ENCODE measurements at regions of chr1 and their contacts with region 1.

Region 1: GRCh38 chr1:154220071-154220969 is at the start of gene UBAP2L:
- DNase-seq: peak; percentile 99
- H3K4me3 Mint-ChIP-seq: peak within 1 kb of the TSS; percentile 96
- H3K27ac Mint-ChIP-seq: peak within 1 kb of the TSS; percentile 98
- H3K4me1 Mint-ChIP-seq: peaks cover 72% of the 10 kb centered on the region
- H3K27me3 Mint-ChIP-seq: no peaks in the 10 kb centered on the region
- total RNA-seq, gene UBAP2L: 154 to 164 TPM

Region 2: DNA sequence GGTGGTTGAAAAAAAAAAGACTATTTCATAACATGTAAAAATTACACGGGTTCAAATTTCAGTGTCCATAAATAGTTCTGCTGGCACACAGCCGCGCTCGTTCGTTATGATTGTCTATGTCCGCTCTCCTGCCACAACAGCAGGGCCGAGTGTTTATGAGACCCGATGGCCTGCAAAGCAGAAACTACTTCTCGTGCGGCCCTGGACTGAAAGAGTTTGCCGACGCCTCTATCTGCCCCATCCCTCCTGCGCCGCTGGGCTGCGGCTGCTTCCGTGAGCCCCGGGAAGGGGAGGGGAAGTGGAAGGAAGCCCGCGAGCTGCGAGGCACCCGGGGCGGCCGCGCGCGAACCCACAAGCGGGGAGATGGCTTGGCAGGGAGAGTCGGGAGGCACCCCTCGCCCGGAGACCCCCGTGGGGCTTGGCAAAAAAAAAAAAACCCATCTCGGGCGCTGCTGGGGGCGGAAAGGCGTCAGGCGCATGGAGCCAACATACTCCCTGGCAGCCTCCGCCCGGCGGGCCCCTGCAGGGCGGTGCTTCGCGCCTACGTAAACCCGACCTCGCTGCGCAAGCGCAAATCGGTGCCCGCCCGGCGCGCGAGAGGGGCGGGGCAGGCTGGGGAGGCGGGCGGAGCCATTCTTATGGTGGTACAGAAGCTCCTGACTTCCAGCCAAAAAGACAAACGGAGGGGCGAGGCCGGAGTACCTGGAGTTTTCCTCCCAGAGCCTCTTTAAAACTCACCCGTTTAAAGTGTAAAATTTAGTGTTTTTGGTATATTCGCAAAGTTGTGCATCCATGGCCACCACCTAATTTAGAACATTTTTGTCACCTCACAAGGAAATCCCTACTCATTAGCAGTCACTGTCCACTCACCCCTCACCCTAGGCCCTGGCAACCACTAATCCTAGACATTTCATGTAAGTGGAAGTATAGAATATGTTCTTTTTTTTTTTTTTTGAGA is 436.8 kb before region 1 on chr1:
- CTCF ChIA-PET with region 1: no interaction called
- intact Hi-C with region 1: loop called (anchors 2 kb)
- DNase-seq: peak; percentile 93
- H3K4me3 Mint-ChIP-seq: peak overlapping the region; percentile 95
- H3K27ac Mint-ChIP-seq: peak overlapping the region; percentile 92
- H3K4me1 Mint-ChIP-seq: peaks cover 5% of the 10 kb centered on the region
- H3K27me3 Mint-ChIP-seq: no peaks in the 10 kb centered on the region

Region 3: GRCh38 chr1:153958111-153958960 is 262.0 kb before region 1 on chr1 and contains the start of gene CRTC2:
- CTCF ChIA-PET with region 1: no interaction called
- intact Hi-C with region 1: loop called (anchors 1 kb)
- DNase-seq: peak; percentile 99
- H3K4me3 Mint-ChIP-seq: peak within 1 kb of the TSS; percentile 86
- H3K27ac Mint-ChIP-seq: peak within 1 kb of the TSS; percentile 92
- H3K4me1 Mint-ChIP-seq: peaks cover 53% of the 10 kb centered on the region
- H3K27me3 Mint-ChIP-seq: no peaks in the 10 kb centered on the region
- total RNA-seq, gene CRTC2: 72.6 to 83.0 TPM

Region 4: GRCh38 chr1:153967082-153968000 is 253.0 kb before region 1 on chr1 and contains the start of gene CREB3L4:
- CTCF ChIA-PET with region 1: no interaction called
- intact Hi-C with region 1: loop called (anchors 2 kb)
- DNase-seq: peak; percentile 90
- H3K4me3 Mint-ChIP-seq: peak within 1 kb of the TSS; percentile 85
- H3K27ac Mint-ChIP-seq: peak within 1 kb of the TSS; percentile 94
- H3K4me1 Mint-ChIP-seq: peaks cover 42% of the 10 kb centered on the region
- H3K27me3 Mint-ChIP-seq: no peaks in the 10 kb centered on the region
- total RNA-seq, gene CREB3L4: 5.6 to 7.4 TPM

Region 5: GRCh38 chr1:154157520-154158306 is 62.6 kb before region 1 on chr1:
- CTCF ChIA-PET with region 1: no interaction called
- intact Hi-C with region 1: loop called (anchors 1 kb)
- DNase-seq: peak; percentile 87
- H3K4me3 Mint-ChIP-seq: peak overlapping the region; percentile 48
- H3K27ac Mint-ChIP-seq: peak overlapping the region; percentile 96
- H3K4me1 Mint-ChIP-seq: peaks cover 70% of the 10 kb centered on the region
- H3K27me3 Mint-ChIP-seq: no peaks in the 10 kb centered on the region

Region 6: DNA sequence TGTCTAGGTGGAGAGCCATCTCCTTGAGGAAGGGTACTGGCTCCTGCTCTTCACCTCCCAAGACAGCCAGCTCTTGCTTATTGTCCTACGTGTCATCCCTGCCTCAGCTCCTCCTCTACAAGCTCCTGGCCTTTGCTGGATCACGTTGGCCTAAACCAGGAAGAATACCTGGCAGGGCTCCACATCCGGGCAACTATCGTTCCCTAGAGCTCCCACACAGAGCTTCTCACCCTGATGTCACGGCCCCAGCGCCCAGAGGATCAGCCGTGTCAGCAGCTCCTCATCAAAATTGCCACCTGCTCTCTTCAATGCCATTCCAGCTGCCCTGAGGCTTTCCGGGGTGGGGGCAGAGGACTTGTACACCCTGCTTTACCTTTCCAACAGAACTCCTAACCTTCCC is 26.5 kb before region 1 on chr1:
- CTCF ChIA-PET with region 1: no interaction called
- intact Hi-C with region 1: no loop called
- DNase-seq: no peak
- H3K4me3 Mint-ChIP-seq: no peak overlapping the region
- H3K27ac Mint-ChIP-seq: no peak overlapping the region
- H3K4me1 Mint-ChIP-seq: peaks cover 4% of the 10 kb centered on the region
- H3K27me3 Mint-ChIP-seq: peaks cover 11% of the 10 kb centered on the region

Region 7: GRCh38 chr1:154263465-154264332 is 43.4 kb after region 1 on chr1:
- CTCF ChIA-PET with region 1: interaction called, 5 read pairs
- intact Hi-C with region 1: loop called (anchors 1 kb)
- DNase-seq: no peak
- H3K4me3 Mint-ChIP-seq: no peak overlapping the region
- H3K27ac Mint-ChIP-seq: peak overlapping the region; percentile 83
- H3K4me1 Mint-ChIP-seq: peaks cover 45% of the 10 kb centered on the region
- H3K27me3 Mint-ChIP-seq: no peaks in the 10 kb centered on the region

Region 8: DNA sequence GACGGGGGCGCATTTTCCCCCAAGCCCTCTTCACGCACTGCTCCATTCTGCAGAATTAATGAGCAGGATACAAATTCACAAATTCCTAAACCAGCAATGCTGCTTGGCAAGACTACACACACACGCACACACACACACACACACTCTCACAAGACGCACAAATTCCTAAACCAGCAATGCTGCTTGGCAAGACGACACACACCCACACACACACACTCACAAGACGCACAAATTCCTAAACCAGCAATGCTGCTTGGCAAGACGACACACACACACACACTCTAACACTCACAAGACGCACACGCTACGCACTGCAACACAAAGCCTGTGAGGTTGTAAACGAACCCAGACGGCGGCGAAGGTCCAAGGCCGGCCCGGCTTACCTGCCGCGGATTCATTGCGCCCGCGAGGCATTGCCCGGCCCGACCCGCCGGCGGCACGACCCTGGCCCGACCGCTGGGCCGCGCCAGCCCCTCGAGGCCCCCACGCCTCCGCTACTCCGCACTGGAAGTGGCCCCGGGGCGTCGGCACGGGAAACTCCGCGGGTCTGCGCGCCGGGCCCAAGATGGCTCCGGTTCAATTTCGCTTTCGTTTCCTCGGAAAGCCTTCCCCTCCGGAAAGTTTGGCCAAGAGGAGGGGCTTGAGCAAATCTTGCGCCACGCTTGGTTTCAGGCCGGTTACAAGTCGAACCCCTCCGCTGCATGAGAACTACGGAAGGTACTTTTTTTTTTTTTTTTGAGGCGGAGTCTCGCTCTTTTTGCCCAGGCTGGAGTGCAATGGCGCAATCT is 387.5 kb after region 1 on chr1 and contains the start of gene ADAR:
- CTCF ChIA-PET with region 1: no interaction called
- intact Hi-C with region 1: loop called (anchors 1 kb)
- DNase-seq: peak; percentile 97
- H3K4me3 Mint-ChIP-seq: peak within 1 kb of the TSS; percentile 91
- H3K27ac Mint-ChIP-seq: peak within 1 kb of the TSS; percentile 96
- H3K4me1 Mint-ChIP-seq: peaks cover 75% of the 10 kb centered on the region
- H3K27me3 Mint-ChIP-seq: no peaks in the 10 kb centered on the region
- total RNA-seq, gene ADAR: 301 to 313 TPM

Measured in activated naive CD4-positive, alpha-beta T cell treated with anti-CD3 and anti-CD28 coated beads for 36 hours (primary cell).